Ovary (tissue), 10 donors: ENCODE measurements at regions of chr2 and their contacts with region 1.

Region 1: GRCh38 chr2:128584296-128584890 is 265.7 kb upstream of the HS6ST1 start:
- DNase-seq: no peak
- H3K4me3 ChIP-seq: no peak overlapping the region
- H3K27ac ChIP-seq: no peak overlapping the region
- H3K4me1 ChIP-seq: no peaks in the 10 kb centered on the region
- H3K27me3 ChIP-seq: no peaks in the 10 kb centered on the region
- CTCF ChIP-seq: no peak
- EP300 ChIP-seq: no peak
- POLR2A ChIP-seq: no peak

Region 2: GRCh38 chr2:128473175-128474035 is 111.0 kb before region 1 on chr2:
- intact Hi-C with region 1: no loop called
- DNase-seq: no peak
- H3K4me3 ChIP-seq: no peak overlapping the region
- H3K27ac ChIP-seq: no peak overlapping the region
- H3K4me1 ChIP-seq: peaks cover 2% of the 10 kb centered on the region
- H3K27me3 ChIP-seq: no peaks in the 10 kb centered on the region
- CTCF ChIP-seq: no peak
- EP300 ChIP-seq: no peak
- POLR2A ChIP-seq: no peak

Region 3: DNA sequence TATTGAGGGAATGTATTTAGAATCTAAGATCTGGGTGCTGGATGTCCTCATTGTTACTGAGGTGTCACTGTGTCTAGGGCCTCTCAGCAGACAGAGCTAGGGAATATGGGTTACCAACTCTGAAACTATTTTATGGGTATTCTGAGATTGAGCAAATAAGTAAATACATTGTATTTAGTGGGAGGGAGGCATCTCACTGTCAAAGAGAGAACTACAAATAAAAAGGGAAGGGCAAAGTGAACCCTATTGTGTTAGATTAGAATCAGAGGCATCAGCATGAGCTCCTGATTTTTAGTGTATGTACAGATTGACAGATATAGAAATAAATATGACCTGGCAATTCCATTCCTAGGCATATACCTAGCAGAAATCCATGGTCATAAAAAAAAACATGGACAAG is 1361.1 kb after region 1 on chr2:
- intact Hi-C with region 1: loop called in 1 of 4 experiments (anchors 5 kb)
- DNase-seq: no peak
- H3K4me3 ChIP-seq: no peak overlapping the region
- H3K27ac ChIP-seq: no peak overlapping the region
- H3K4me1 ChIP-seq: no peaks in the 10 kb centered on the region
- H3K27me3 ChIP-seq: no peaks in the 10 kb centered on the region
- CTCF ChIP-seq: no peak
- EP300 ChIP-seq: no peak
- POLR2A ChIP-seq: no peak